PC-3 (cell line): ENCODE measurements at regions of chr22 and their contacts with region 1.

Region 1: GRCh38 chr22:29701155-29701999 is 18.4 kb upstream of the CABP7 start:
- DNase-seq: peak; percentile 94
- ATAC-seq: peak; percentile 81
- H3K4me3 ChIP-seq: peak overlapping the region; percentile 29; the same call in 1 of the 2 replicates
- H3K27ac ChIP-seq: peak overlapping the region; percentile 89
- H3K4me1 ChIP-seq: peaks cover 50% of the 10 kb centered on the region
- H3K27me3 ChIP-seq: no peaks in the 10 kb centered on the region
- CTCF ChIP-seq: peak; percentile 59

Region 2: DNA sequence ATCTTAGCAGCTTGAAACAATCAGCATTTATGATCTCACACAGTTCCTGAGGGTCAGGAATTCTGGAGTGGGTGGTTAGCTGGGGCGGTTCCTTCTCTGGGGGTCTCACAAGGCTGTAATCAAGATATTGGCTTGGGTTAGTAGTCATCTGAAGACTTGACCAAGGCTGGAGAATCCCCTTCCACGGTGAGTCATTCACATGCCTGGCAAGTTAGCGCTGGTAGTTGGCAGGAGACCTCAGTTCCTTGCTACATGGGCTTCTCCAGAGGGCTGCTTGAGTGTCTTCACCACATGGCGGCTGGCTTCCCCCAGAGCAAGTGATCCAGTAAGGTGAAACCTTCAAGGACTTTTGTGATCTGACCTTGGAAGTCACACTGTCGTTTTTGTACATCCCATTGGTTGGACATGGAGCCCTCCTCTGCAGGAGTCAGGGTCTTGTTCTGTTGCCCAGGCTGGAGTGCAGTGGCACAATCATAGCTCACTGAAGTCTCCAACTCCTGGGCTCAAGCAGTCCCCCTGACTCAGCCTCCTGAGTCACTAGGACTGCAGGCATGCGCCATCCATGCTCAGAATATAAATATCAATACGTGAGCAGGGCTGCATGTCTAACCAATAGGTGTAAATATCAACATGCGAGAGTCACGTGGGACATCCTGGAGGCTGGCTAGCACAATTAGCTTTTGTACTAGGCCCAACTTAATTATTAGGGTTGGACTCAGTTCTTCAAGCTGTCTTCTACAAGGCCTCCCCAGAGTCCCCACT is 113.3 kb before region 1 on chr22:
- CTCF ChIA-PET with region 1: no interaction called
- POLR2A ChIA-PET with region 1: no interaction called
- intact Hi-C with region 1: no loop called
- DNase-seq: peak; percentile 67
- ATAC-seq: peak; percentile 63
- H3K4me3 ChIP-seq: no peak overlapping the region
- H3K27ac ChIP-seq: 0 out of 2 replicates have a peak overlapping the region, but pooled peaks have one; percentile 45
- H3K4me1 ChIP-seq: peaks cover 9% of the 10 kb centered on the region
- H3K27me3 ChIP-seq: no peaks in the 10 kb centered on the region
- CTCF ChIP-seq: no peak

Region 3: GRCh38 chr22:29766632-29767170 is 65.3 kb after region 1 on chr22 and contains the start of gene ZMAT5:
- CTCF ChIA-PET with region 1: no interaction called
- POLR2A ChIA-PET with region 1: no interaction called
- intact Hi-C with region 1: loop called (anchors 2 kb)
- DNase-seq: peak; percentile 94
- ATAC-seq: peak; percentile 96
- H3K4me3 ChIP-seq: peak within 1 kb of the TSS; percentile 100
- H3K27ac ChIP-seq: peak within 1 kb of the TSS; percentile 79
- H3K4me1 ChIP-seq: peaks cover 9% of the 10 kb centered on the region; the same call in 1 of the 2 replicates
- H3K27me3 ChIP-seq: no peaks in the 10 kb centered on the region
- CTCF ChIP-seq: no peak
- total RNA-seq, gene ZMAT5: 24.2 and 37.7 TPM in 2 replicates

Region 4: GRCh38 chr22:29813563-29813962 is 112.2 kb after region 1 on chr22:
- CTCF ChIA-PET with region 1: no interaction called
- POLR2A ChIA-PET with region 1: interaction called, 20 read pairs
- intact Hi-C with region 1: no loop called
- DNase-seq: peak; percentile 55
- ATAC-seq: peak; percentile 83
- H3K4me3 ChIP-seq: no peak overlapping the region
- H3K27ac ChIP-seq: peak overlapping the region; percentile 39
- H3K4me1 ChIP-seq: peaks cover 29% of the 10 kb centered on the region
- H3K27me3 ChIP-seq: no peaks in the 10 kb centered on the region
- CTCF ChIP-seq: peak; percentile 51

Region 5: GRCh38 chr22:30005213-30005857 is 304.0 kb after region 1 on chr22:
- CTCF ChIA-PET with region 1: no interaction called
- POLR2A ChIA-PET with region 1: no interaction called
- intact Hi-C with region 1: loop called (anchors 10 kb)
- DNase-seq: peak; percentile 84
- ATAC-seq: peak; percentile 85
- H3K4me3 ChIP-seq: no peak overlapping the region
- H3K27ac ChIP-seq: no peak overlapping the region
- H3K4me1 ChIP-seq: no peaks in the 10 kb centered on the region
- H3K27me3 ChIP-seq: no peaks in the 10 kb centered on the region
- CTCF ChIP-seq: peak; percentile 93

Region 6: GRCh38 chr22:30089655-30089974 is 388.2 kb after region 1 on chr22:
- CTCF ChIA-PET with region 1: interaction called, 8 read pairs
- POLR2A ChIA-PET with region 1: no interaction called
- intact Hi-C with region 1: loop called (anchors 5 kb)
- DNase-seq: no peak
- ATAC-seq: no peak
- H3K4me3 ChIP-seq: no peak overlapping the region
- H3K27ac ChIP-seq: 0 out of 2 replicates have a peak overlapping the region, but pooled peaks have one; percentile 40
- H3K4me1 ChIP-seq: no peaks in the 10 kb centered on the region; the same call in 1 of the 2 replicates
- H3K27me3 ChIP-seq: no peaks in the 10 kb centered on the region
- CTCF ChIP-seq: no peak